Mammary epithelial cell (primary cell): ENCODE measurements at regions of chr19 and their contacts with region 1.

Region 1: GRCh38 chr19:55476100-55476775 is at the start of gene ZNF628:
- DNase-seq: peak; percentile 97
- H3K4me3 ChIP-seq: peak within 1 kb of the TSS; percentile 56 to 88 (median 66)
- H3K27ac ChIP-seq: peak within 1 kb of the TSS; percentile 75
- H3K4me1 ChIP-seq: peaks cover 25% of the 10 kb centered on the region
- H3K27me3 ChIP-seq: no peaks in the 10 kb centered on the region
- CTCF ChIP-seq: no peak
- total RNA-seq, gene ZNF628: 2.7 to 10.0 TPM

Region 2: DNA sequence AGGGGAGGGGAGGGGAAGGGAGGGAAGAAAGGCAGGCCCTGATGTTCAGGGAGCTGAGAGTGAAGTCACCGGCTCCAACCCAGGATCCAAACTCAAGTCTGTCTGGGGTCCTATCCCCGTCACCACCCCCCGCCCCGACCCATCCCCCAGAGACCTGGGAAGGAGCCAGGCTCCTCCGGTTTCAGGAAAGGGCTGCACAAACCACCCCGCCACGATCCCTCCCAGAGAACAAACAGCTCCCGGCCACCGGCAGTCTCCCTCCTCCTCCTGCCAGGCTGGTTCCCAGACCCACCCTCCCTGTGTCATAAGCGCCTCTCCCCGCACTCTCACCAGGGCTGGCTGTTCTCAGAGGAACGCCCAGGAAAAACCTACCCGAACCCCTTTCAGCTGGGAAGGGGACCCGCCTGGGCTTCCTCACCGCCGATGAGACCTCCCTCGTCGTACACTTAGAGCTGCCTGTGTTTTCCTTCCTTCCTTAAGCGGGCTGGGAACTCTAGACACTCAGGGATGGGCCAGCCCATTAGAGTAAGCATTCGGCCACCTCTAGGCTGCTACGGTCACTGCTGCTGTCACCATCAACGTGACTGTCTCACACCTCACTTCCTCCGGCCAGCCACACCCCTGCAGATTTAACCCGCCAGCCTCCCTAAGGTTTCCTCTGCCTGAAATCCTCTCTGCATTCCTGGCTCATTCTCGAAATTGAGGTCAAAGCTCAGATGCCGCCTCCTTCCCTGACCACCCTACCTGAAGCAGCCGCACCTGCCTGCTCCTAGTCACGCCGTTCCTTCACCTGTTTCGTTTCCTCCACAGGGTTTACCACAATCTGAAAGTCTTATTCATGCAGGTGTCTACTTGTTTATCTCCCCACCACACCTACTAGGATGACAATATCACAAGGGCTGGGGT is 407.0 kb before region 1 on chr19:
- CTCF ChIA-PET with region 1: interaction called, 6 read pairs
- dilution Hi-C with region 1: loop called (anchors 10 kb)
- in situ Hi-C with region 1: no loop called
- intact Hi-C with region 1: no loop called
- DNase-seq: peak; percentile 78
- H3K4me3 ChIP-seq: peak overlapping the region; percentile 7 to 46 (median 24)
- H3K27ac ChIP-seq: no peak overlapping the region
- H3K4me1 ChIP-seq: peaks cover 12% of the 10 kb centered on the region
- H3K27me3 ChIP-seq: no peaks in the 10 kb centered on the region
- CTCF ChIP-seq: no peak

Region 3: DNA sequence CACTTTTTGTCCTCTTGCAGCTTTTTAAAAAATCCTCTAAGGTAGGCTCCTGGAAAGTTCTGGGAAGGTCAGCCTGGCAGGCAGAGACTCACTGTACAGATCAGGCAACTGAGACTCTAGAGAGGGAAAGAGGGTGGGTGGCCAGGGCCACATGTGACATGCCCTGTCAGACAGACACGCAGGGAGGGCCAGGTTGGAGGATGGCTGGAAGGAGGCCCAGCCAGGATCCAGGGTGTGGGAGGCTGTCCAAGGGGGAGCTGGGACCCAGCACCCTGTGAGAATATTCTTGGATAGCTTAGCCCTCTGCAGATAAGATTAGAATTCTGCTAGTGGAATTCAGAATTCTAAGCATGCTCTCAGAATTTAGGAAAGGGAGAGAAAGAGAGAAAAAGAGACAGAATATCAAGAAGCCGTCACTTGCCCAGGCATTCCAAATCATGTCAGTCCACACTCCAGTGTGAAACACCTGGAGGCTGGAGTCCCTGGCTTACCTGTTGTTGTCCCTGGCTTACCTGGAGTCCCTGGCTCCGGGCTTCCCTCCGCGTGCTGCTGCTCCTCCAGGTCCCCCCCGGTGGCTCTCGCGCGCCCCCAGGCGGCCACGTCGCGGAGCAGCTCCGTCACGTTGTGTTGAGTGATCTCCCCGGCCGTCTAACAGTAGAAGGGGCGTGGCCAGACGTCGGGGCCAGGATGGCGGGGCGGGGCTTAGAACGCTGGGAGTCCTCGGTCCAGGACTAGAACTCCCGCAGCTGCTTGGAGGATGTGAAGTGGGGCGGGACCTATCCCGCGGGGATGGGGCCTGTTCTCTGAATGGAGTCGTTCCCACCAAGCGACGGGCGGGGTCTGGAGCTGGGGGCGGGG is 315.9 kb before region 1 on chr19:
- CTCF ChIA-PET with region 1: interaction called, 16 read pairs
- dilution Hi-C with region 1: no loop called
- in situ Hi-C with region 1: no loop called
- intact Hi-C with region 1: no loop called
- DNase-seq: peak; percentile 83
- H3K4me3 ChIP-seq: no peak overlapping the region
- H3K27ac ChIP-seq: no peak overlapping the region
- H3K4me1 ChIP-seq: peaks cover 18% of the 10 kb centered on the region
- H3K27me3 ChIP-seq: peaks cover 2% of the 10 kb centered on the region
- CTCF ChIP-seq: peak; percentile 86 to 97

Region 4: DNA sequence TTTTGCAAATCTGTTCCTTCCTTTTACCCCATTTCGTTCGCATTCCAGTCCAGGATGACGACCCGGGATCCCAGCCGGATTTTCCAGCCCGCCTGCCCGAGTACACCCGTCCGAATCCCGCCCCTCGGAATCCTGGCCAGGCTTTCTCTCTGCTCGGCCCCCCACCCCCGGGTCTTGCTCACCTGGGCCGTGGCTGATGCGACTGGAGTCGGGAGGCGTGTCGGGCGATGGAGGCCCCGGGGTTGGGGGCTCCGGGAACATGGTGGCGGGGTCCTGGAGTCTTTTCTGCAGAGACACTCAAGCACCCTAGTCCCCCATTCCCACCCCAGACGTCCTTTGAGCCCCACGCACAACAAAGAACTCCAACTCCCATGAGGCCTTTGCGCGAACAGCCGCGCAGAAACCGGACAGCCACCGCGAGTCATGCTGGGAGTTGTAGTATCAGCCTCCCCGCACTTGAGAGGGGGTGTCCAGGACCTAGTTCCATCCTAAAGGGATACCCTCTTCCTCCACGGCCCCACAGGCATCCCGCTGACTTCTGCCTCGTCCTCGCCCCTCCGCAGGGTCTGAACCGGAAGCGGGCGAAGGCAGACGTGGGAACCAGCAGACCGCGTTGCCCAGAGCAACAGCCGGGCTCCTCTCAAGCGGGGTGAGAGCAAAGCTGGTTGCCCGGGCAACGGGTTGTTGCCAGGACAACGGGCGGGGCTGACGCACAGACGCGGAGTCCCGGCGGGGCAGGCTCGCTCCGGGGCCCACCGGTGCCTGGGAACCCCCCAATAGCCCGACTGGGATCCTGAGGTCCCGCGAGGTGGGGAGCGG is 297.2 kb before region 1 on chr19:
- CTCF ChIA-PET with region 1: no interaction called
- dilution Hi-C with region 1: loop called (anchors 10 kb)
- in situ Hi-C with region 1: no loop called
- intact Hi-C with region 1: no loop called
- DNase-seq: peak; percentile 79
- H3K4me3 ChIP-seq: peak overlapping the region; percentile 13 to 39 (median 29)
- H3K27ac ChIP-seq: peak overlapping the region; percentile 19
- H3K4me1 ChIP-seq: peaks cover 10% of the 10 kb centered on the region
- H3K27me3 ChIP-seq: no peaks in the 10 kb centered on the region
- CTCF ChIP-seq: no peak

Region 5: DNA sequence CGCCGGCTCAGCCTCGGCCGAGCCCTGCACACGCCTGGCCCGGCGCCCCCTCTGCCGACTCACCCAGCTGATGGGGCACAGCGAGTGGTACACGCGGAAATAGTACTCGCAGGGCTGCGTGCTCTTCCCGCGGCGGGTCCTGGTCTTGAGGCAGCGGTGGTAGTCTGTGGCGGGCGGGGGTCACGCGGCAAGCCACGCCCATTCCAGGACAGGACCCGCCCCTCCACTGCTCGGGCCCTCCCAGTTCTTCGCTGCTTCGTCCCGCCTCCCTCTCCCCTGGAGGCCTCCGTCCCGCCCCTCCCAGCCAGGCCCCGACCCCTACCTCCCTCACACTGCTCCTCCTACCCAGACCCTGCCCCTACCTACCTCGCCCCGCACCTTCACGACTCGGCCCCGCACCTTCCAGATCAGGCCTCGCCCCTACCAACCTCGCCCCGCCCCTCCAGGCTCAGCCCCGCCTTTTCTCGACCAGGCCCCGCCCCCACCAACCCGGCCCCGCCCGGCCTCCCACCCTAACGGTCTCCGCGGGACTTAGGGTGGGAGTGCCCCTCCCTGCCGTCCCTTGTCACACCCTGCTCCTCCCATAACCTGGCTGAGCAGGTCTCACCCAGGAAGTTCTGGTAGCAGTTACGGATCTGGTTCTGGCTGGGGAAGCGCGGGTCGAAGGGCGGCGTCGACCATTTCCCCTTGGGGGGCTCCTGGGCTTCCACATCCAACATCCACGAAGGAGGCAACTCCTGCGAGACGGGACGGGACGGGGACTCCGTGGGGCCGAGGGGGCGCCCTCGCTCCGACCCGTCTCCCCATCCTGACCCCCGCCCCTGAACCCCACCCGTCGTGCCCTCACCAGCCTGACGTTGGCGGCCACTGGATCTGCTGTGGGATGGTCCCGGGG is 122.2 kb before region 1 on chr19:
- CTCF ChIA-PET with region 1: no interaction called
- dilution Hi-C with region 1: loop called (anchors 10 kb)
- in situ Hi-C with region 1: no loop called
- intact Hi-C with region 1: no loop called
- DNase-seq: peak; percentile 60
- H3K4me3 ChIP-seq: peak overlapping the region; percentile 47 to 59 (median 48)
- H3K27ac ChIP-seq: no peak overlapping the region
- H3K4me1 ChIP-seq: peaks cover 30% of the 10 kb centered on the region
- H3K27me3 ChIP-seq: no peaks in the 10 kb centered on the region
- CTCF ChIP-seq: no peak

Region 6: DNA sequence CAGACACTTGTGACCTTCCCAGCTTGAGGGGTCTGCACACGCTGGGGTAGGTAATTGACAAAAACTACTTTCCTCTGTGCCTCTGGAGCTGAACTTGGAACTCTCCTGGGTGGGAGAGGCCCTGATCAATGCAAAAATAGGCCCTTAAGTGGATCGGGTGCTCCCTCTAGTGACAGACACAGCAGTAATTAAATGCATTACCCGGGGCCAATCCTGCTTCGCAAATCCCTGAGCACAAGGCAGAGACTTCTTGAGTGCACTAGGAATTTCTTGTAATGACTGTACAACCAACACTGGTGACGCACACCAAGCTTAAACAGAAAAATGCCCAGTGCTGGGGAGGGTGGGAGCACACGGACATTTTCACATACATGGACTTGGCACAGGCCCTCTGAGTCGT is 58.1 kb before region 1 on chr19:
- CTCF ChIA-PET with region 1: no interaction called
- dilution Hi-C with region 1: no loop called
- in situ Hi-C with region 1: no loop called
- intact Hi-C with region 1: no loop called
- DNase-seq: peak; percentile 69
- H3K4me3 ChIP-seq: no peak overlapping the region
- H3K27ac ChIP-seq: no peak overlapping the region
- H3K4me1 ChIP-seq: no peaks in the 10 kb centered on the region
- H3K27me3 ChIP-seq: peaks cover 3% of the 10 kb centered on the region
- CTCF ChIP-seq: peak; percentile 75 to 77

Region 7: DNA sequence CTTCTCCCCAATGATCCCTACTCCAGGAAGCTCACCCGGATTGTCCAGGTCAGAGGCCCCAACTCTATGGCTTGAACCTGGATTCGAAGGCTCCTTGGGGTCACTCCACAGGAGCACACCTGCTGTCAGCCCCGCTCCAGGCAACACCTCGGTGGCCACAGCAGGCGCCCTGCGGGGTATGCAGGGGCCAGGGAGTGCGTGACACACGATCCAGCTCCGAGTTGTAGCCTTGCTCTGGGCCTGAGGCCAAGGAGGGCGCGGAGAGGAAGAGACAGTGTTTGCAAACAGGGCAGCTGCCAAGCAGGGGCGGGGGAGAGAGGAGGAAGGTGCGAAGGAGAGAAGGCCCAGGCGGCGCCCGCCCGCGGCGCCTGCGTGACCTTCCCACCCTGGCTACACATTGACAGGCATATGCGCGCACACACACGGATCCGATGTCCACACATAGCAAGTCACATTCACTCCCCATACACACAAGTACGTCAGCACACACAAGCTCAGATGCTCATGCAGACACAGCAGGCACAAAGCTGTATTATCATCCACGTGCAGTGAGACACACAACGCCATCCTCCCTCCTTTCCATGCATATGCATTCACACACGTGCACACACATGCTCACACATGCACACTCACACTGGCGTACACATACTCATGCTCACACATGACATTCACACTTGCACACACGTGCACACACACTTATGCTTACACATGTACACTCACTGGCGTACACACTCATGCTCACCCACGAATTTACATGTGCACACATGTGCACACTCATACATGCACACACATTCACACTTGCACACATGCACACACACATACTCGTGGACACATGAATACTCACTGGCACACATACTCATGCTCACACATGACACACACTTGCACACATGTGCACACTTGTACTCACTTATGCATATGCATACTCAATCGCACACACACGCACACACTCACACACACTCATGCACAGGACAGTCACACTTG is 50.3 kb after region 1 on chr19:
- CTCF ChIA-PET with region 1: no interaction called
- dilution Hi-C with region 1: loop called (anchors 5 kb)
- in situ Hi-C with region 1: no loop called
- intact Hi-C with region 1: no loop called
- DNase-seq: no peak
- H3K4me3 ChIP-seq: no peak overlapping the region
- H3K27ac ChIP-seq: no peak overlapping the region
- H3K4me1 ChIP-seq: no peaks in the 10 kb centered on the region
- H3K27me3 ChIP-seq: no peaks in the 10 kb centered on the region
- CTCF ChIP-seq: no peak

Region 8: DNA sequence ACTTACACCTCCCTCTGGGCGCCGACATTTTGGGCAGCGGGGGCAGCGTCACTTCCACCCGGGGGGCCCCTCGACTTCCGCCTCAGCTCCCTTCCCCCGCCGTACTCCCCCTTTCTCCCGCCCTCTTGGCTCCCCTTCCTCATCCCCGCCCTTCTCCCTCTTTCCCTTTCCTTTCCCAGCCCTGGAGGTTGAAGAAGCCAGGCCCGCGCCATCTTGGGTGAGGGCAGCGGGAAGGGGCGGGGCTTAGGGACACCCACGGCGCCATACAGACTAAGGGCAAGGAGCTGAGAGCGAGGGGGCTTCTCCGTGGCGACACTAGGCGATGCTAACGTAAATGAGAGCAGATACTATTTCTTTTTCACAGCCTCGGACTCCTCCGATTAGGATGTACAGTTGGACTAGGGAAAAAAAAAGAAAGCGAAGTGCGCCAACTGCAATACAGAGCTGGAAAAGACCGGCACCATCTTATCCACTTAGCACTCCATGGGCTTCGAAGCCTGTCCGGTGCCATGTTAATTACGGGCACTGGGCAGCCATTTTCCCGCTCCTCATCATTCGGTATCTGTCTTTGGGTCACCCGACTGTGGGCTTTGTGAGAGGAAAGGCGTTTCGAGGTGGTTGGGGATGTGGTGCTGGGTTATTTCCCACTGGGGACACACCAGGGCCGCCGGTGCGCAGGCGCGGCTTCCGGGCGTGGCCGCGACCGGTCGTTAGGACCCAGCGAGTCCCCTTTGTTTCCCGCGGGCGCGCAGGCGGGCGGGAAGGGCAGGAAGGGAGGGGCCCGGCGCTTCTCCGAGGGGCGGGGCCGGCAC is 123.4 kb after region 1 on chr19 and contains the start of gene FIZ1:
- CTCF ChIA-PET with region 1: no interaction called
- dilution Hi-C with region 1: loop called (anchors 5 kb)
- in situ Hi-C with region 1: no loop called
- intact Hi-C with region 1: no loop called
- DNase-seq: peak; percentile 98
- H3K4me3 ChIP-seq: peak within 1 kb of the TSS; percentile 60 to 92 (median 80)
- H3K27ac ChIP-seq: peak within 1 kb of the TSS; percentile 89
- H3K4me1 ChIP-seq: peaks cover 10% of the 10 kb centered on the region
- H3K27me3 ChIP-seq: no peaks in the 10 kb centered on the region
- CTCF ChIP-seq: no peak
- total RNA-seq, gene FIZ1: 5.3 to 13.4 TPM